PC-3 (cell line): ENCODE measurements at regions of chr10 and their contacts with region 1.

Region 1: GRCh38 chr10:17062955-17063484 is 66.6 kb downstream of the CUBN start:
- DNase-seq: peak; percentile 81
- ATAC-seq: peak; percentile 88
- H3K4me3 ChIP-seq: peak overlapping the region; percentile 56
- H3K27ac ChIP-seq: peak overlapping the region; percentile 97
- H3K4me1 ChIP-seq: peaks cover 53% of the 10 kb centered on the region
- H3K27me3 ChIP-seq: no peaks in the 10 kb centered on the region
- CTCF ChIP-seq: no peak

Region 2: DNA sequence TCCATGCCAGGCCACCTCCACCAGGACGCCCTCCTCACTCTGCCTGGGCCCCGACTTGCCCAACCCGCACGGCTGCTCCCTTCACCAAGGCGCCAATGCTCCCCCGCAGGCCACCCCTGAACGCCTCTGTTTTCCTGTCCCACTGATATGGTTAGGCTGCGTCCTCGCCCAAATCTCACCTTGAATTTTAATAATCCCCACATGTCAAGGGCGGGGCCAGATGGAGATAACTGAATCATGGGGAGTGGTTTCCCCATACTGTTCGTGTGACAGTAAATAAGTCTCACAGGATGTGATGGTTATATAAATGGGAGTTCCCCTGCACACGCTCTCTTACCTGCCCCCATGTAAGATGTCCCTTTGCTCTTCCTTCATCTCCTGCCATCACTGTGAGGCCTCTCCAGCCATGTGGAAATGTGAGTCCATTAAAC is 275.6 kb before region 1 on chr10:
- CTCF ChIA-PET with region 1: no interaction called
- POLR2A ChIA-PET with region 1: no interaction called
- intact Hi-C with region 1: no loop called
- DNase-seq: no peak
- ATAC-seq: no peak
- H3K4me3 ChIP-seq: no peak overlapping the region
- H3K27ac ChIP-seq: no peak overlapping the region
- H3K4me1 ChIP-seq: no peaks in the 10 kb centered on the region
- H3K27me3 ChIP-seq: no peaks in the 10 kb centered on the region
- CTCF ChIP-seq: no peak

Region 3: GRCh38 chr10:16891375-16892313 is 171.4 kb before region 1 on chr10:
- CTCF ChIA-PET with region 1: no interaction called
- POLR2A ChIA-PET with region 1: no interaction called
- intact Hi-C with region 1: loop called (anchors 5 kb)
- DNase-seq: peak; percentile 77
- ATAC-seq: peak; percentile 75
- H3K4me3 ChIP-seq: no peak overlapping the region
- H3K27ac ChIP-seq: peak overlapping the region; percentile 82
- H3K4me1 ChIP-seq: peaks cover 28% of the 10 kb centered on the region
- H3K27me3 ChIP-seq: no peaks in the 10 kb centered on the region
- CTCF ChIP-seq: no peak

Region 4: DNA sequence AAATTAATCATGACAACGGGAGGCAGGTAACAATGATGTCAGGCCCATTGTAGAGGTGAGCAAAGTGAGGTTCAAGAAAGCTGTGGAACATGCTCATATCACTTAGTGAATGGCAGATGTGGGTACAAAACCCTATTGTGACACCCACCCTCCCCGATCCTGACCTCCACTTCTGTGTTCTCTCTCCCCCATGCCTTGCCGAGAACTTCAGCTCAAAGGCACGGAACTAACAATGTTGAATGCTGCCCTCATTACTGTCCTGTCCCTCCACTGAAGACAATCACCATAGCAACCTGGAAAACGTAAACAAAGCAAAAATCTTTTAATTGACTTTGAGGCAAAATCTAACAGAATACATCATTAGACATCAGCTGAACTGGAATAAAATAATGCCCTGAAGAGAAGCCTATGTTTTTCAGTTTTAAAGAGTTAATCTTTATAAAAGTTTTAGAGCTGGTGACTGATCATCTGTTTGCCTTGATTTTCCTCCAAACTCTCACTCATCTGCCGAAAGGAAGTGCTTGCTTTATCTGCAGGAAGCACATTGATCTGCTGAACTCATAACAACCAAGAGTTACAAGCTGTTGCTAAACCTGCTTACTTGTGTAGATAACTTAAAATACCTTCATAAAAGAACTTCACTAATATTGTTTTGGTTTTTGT is 67.0 kb before region 1 on chr10:
- CTCF ChIA-PET with region 1: no interaction called
- POLR2A ChIA-PET with region 1: no interaction called
- intact Hi-C with region 1: loop called (anchors 2 kb)
- DNase-seq: peak; percentile 53
- ATAC-seq: peak; percentile 81
- H3K4me3 ChIP-seq: peak overlapping the region; percentile 42
- H3K27ac ChIP-seq: peak overlapping the region; percentile 95
- H3K4me1 ChIP-seq: peaks cover 19% of the 10 kb centered on the region
- H3K27me3 ChIP-seq: no peaks in the 10 kb centered on the region
- CTCF ChIP-seq: no peak

Region 5: DNA sequence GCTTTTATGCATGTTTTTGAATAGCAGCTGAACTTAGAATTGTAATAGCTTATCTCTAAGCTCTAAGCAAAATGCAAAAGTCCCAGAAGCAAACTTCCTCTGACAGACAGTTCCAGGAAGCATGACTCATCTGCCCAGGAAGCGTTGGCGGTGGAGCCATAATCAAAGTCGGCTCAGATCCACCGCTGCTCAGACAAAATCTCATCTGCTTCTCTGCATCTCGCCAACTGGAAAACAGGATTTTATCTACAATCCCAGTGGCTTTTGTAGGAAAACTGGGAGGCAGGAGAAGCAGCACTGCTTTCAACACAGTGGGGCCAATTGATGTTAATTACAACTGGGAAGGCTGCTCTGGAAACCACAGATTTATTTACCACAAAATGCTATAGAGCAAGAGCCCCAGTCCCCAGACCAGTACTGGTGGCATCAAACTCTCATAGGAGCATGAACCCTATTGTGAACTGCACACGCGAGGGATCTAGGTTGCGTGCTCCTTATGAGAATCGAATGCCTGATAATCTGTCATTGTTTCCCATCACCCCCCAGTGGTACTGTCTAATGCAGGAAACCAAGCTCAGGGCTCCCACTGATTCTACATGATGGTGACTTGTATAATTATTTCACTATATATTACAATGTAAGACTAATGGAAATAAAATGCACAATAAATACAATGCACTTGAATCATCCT is 33.3 kb before region 1 on chr10:
- CTCF ChIA-PET with region 1: interaction called, 3 read pairs
- POLR2A ChIA-PET with region 1: interaction called, 4 read pairs
- intact Hi-C with region 1: loop called (anchors 2 kb)
- DNase-seq: peak; percentile 68
- ATAC-seq: peak; percentile 70
- H3K4me3 ChIP-seq: peak overlapping the region; percentile 48; the same call in 1 of the 2 replicates
- H3K27ac ChIP-seq: peak overlapping the region; percentile 94
- H3K4me1 ChIP-seq: peaks cover 38% of the 10 kb centered on the region
- H3K27me3 ChIP-seq: no peaks in the 10 kb centered on the region
- CTCF ChIP-seq: no peak

Region 6: GRCh38 chr10:17113889-17114540 is 51.0 kb after region 1 on chr10:
- CTCF ChIA-PET with region 1: no interaction called
- POLR2A ChIA-PET with region 1: interaction called, 12 read pairs
- intact Hi-C with region 1: no loop called
- DNase-seq: no peak
- ATAC-seq: no peak
- H3K4me3 ChIP-seq: no peak overlapping the region
- H3K27ac ChIP-seq: peak overlapping the region; percentile 96
- H3K4me1 ChIP-seq: peaks cover 37% of the 10 kb centered on the region
- H3K27me3 ChIP-seq: no peaks in the 10 kb centered on the region
- CTCF ChIP-seq: no peak

Region 7: DNA sequence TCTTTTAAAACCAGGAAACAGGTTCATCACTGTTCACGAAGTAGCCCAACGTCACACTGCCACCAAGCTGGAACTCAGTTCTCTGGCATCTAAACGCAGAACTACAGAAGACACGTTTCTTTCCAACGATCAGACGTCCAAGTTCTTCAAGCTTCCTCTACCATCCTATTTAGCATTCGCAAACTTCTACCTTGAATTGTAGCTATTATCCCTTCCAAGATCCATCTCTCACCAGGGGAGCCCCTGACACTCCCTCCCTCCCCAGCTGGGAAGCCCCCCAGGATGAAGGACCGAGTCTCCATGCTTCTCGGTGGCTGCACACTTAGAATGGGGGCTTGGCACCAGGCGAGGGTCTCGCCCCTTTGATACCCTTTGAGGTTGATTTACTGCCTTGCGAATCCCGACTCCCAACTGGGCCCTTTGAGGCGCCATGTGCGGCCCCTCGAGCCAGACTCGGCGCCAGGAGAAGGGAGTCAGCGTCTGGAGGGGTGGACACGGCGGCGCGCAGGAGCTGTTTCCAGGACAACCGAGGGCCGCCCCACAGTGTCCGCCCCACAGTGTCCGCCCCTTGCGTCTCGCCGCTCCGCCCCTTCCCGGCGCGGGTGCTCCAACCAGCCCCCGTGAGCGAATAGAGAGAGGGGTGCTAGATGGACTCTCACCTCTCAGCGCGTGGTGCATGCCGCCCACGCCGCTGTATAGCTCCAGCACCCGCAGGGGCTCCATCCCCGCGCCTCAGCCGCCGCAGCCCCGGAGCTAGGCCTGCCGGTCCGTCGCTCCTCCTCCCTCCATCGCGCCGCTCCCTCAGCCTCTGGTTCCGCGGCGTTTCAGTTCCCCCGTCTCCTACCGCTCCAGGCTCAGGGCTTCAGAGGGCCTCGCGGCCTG is 138.1 kb after region 1 on chr10 and contains the start of gene TRDMT1:
- CTCF ChIA-PET with region 1: no interaction called
- POLR2A ChIA-PET with region 1: no interaction called
- intact Hi-C with region 1: loop called (anchors 10 kb)
- DNase-seq: peak; percentile 55
- ATAC-seq: peak; percentile 95
- H3K4me3 ChIP-seq: peak within 1 kb of the TSS; percentile 80
- H3K27ac ChIP-seq: peak within 1 kb of the TSS; percentile 75
- H3K4me1 ChIP-seq: peaks cover 14% of the 10 kb centered on the region
- H3K27me3 ChIP-seq: no peaks in the 10 kb centered on the region
- CTCF ChIP-seq: no peak
- total RNA-seq, gene TRDMT1: 1.3 and 2.0 TPM in 2 replicates

Region 8: DNA sequence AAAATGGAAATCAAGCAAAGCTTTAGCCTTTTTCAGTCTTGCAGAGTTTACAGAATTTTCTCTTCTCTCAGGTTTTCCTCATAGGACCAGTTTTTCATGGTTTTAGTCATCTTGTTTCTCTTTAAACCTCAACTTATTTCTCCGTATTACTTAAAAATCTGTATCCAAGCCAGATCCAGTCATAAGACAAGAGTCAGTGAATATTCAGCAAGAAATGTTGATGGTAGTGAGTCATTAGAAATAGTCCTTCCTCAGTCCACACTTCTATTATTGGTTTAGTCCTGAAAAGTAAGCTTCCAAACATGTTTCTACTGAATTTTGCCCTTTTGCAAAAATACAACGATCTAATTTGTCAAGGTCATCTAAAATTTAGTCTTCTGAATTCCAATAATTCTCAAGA is 272.0 kb after region 1 on chr10:
- CTCF ChIA-PET with region 1: no interaction called
- POLR2A ChIA-PET with region 1: no interaction called
- intact Hi-C with region 1: no loop called
- DNase-seq: peak; percentile 56
- ATAC-seq: peak; percentile 50; the same call in 1 of the 2 replicates
- H3K4me3 ChIP-seq: peak overlapping the region; percentile 32; the same call in 1 of the 2 replicates
- H3K27ac ChIP-seq: no peak overlapping the region
- H3K4me1 ChIP-seq: peaks cover 9% of the 10 kb centered on the region; the same call in 1 of the 2 replicates
- H3K27me3 ChIP-seq: no peaks in the 10 kb centered on the region
- CTCF ChIP-seq: no peak